Naive thymus-derived CD4-positive, alpha-beta T cell (primary cell): ENCODE measurements at regions of chr12 and their contacts with region 1.

Region 1: GRCh38 chr12:116277393-116278278 is at the start of gene MED13L:
- DNase-seq: peak; percentile 85 to 96 (median 92)
- ATAC-seq: peak; percentile 91
- H3K4me3 ChIP-seq: peak within 1 kb of the TSS; percentile 82
- H3K4me3 Mint-ChIP-seq: peak within 1 kb of the TSS; percentile 92 to 99 (median 98)
- H3K27ac ChIP-seq: peak within 1 kb of the TSS; percentile 68
- H3K27ac Mint-ChIP-seq: peak within 1 kb of the TSS; percentile 92 to 97 (median 94)
- H3K4me1 ChIP-seq: peaks cover 13 to 20% of the 10 kb centered on the region in 2 donors
- H3K4me1 Mint-ChIP-seq: peaks cover 33 to 48% (median 38%) of the 10 kb centered on the region in 7 donors
- H3K27me3 ChIP-seq: no peaks in the 10 kb centered on the region
- H3K27me3 Mint-ChIP-seq: peaks cover 0 to 7% (median 0%) of the 10 kb centered on the region in 5 donors
- total RNA-seq, gene MED13L: 94.0 to 283 (median 180) TPM

Region 2: DNA sequence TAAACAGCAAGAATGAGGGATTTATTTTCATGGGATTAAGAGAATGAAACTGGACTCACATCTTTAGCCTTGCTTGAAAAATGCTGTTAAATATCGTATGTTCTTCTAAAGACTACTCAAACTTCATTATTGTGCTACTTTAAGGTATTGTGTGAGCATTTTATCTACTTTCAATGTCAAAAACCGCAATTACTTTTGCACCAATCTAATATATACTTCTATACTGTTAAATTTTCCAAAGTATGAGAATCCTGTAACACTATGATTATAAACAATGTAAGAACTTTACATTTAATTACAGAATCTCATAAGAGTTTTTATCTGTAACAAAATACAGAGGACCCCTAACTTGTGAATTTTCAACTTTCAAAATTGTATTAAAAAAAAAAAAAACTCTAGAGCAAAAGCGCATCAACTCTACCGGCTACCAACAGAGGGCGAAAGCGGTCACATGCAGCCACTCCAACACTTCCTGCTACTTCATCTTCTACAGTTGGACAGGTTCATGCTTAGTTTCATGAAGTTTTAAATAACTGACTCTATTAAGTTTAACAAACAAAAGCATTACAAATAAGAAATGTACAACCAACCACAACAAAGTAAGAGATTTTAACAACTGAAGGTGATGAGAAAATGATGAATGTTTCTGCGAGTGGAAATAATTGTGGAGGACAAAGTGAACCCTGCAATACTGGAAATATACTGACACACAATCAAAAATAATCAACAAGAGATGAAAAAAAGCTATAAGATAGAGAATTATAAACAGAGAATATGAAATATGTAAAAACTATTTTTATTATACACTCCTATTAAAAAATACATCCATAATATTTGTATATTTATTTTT is 211.0 kb before region 1 on chr12:
- CTCF ChIA-PET with region 1: interaction called, 3 read pairs
- POLR2A ChIA-PET with region 1: no interaction called
- intact Hi-C with region 1: loop called (anchors 1 to 2 kb)
- DNase-seq: peak; percentile 18 to 58 (median 49)
- ATAC-seq: peak; percentile 87
- H3K4me3 ChIP-seq: no peak overlapping the region
- H3K4me3 Mint-ChIP-seq: peak overlapping the region in 1 of 10 donors; percentile 14
- H3K27ac ChIP-seq: no peak overlapping the region
- H3K27ac Mint-ChIP-seq: peak overlapping the region in 4 of 9 donors; percentile 3 to 80 (median 10)
- H3K4me1 ChIP-seq: no peaks in the 10 kb centered on the region
- H3K4me1 Mint-ChIP-seq: peaks cover 22 to 72% (median 55%) of the 10 kb centered on the region in 7 donors
- H3K27me3 ChIP-seq: no peaks in the 10 kb centered on the region
- H3K27me3 Mint-ChIP-seq: no peaks in the 10 kb centered on the region

Region 3: DNA sequence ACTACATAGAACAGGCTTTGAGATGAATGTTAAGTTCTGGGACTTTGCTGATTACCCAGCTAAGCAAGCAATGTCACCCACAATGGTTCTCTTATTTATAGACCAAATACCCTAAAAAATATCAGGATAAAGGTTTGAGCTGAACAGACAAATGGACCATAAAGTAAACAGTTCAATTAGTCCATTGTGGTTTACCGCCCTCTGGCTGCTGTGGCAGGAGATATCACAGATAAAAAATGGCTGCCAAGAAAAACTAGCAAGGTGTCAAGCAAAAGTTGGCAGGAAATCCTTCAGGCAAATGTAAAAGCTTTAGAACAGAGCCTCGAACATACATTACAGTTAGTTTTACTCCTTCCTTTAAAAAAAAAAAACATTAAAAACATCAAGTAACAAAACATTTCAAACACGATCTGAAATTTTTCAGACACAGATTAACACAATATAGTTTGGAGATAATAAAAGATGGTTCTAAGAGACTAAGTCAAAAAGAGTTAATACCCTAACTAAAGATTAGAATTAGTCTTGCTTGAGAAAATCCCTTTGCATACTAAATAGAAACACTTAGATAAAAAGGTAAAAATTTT is 41.4 kb before region 1 on chr12:
- CTCF ChIA-PET with region 1: no interaction called
- POLR2A ChIA-PET with region 1: interaction called, 3 read pairs
- intact Hi-C with region 1: loop called (anchors 1 to 2 kb)
- DNase-seq: peak in 8 of 9 donors; percentile 34 to 61 (median 46)
- ATAC-seq: peak; percentile 85
- H3K4me3 ChIP-seq: no peak overlapping the region
- H3K4me3 Mint-ChIP-seq: peak overlapping the region in 8 of 10 donors; percentile 16 to 71 (median 44)
- H3K27ac ChIP-seq: peak overlapping the region; percentile 37
- H3K27ac Mint-ChIP-seq: peak overlapping the region; percentile 38 to 89 (median 82)
- H3K4me1 ChIP-seq: peaks cover 0 to 18% of the 10 kb centered on the region in 2 donors
- H3K4me1 Mint-ChIP-seq: peaks cover 25 to 70% (median 57%) of the 10 kb centered on the region in 7 donors
- H3K27me3 ChIP-seq: no peaks in the 10 kb centered on the region
- H3K27me3 Mint-ChIP-seq: no peaks in the 10 kb centered on the region

Region 4: GRCh38 chr12:116314477-116314876 is 36.8 kb after region 1 on chr12:
- CTCF ChIA-PET with region 1: no interaction called
- POLR2A ChIA-PET with region 1: no interaction called
- intact Hi-C with region 1: no loop called
- DNase-seq: no peak
- ATAC-seq: peak; percentile 34
- H3K4me3 ChIP-seq: no peak overlapping the region
- H3K4me3 Mint-ChIP-seq: no peak overlapping the region
- H3K27ac ChIP-seq: no peak overlapping the region
- H3K27ac Mint-ChIP-seq: no peak overlapping the region
- H3K4me1 ChIP-seq: peaks cover 0 to 2% of the 10 kb centered on the region in 2 donors
- H3K4me1 Mint-ChIP-seq: peaks cover 5 to 23% (median 8%) of the 10 kb centered on the region in 7 donors
- H3K27me3 ChIP-seq: no peaks in the 10 kb centered on the region
- H3K27me3 Mint-ChIP-seq: peaks cover 0 to 3% (median 0%) of the 10 kb centered on the region in 5 donors

Region 5: DNA sequence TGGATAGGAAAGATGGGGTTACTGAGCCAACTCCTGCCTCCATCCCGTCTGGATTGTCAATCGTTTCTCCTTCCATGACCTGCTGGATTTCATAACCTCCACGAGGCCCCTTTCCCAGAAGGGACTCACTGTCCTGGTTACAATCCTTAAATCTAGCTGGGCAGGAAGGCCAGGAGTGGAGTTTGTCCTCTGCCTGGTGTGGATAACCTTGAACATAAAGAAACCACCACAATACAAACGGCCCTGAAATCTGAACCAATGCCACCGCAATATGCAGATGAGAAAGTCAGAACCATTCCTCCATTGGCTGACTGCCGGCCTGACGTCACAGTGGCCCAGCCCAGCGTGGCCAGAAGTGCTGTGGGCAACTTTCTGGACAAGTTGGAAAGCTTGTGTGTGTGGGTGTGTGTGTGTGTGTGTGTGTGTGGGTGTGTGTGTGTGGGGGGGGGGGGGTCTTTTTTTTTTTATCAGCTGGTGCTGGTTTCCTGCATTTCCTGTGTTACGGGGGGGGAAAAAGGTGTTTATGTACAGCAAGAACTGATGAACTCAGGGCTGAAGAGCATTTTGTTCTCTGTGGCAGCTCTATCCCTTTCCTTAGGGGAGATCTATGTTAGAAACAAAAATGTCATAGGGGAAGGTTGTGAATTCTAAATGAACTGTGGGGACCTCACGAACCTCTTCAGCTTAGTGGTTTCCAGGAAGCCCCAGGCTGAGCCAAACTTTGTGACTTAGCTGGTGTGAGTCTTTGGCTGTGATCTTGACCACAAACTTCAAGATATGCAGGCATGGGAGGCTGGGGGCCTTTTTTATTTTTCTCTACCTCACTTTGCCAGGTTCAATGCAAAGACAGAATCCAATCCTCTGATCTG is 81.5 kb after region 1 on chr12:
- CTCF ChIA-PET with region 1: interaction called, 3 read pairs
- POLR2A ChIA-PET with region 1: interaction called, 3 read pairs
- intact Hi-C with region 1: loop called (anchors 1 kb)
- DNase-seq: peak; percentile 45 to 74 (median 57)
- ATAC-seq: peak; percentile 93
- H3K4me3 ChIP-seq: peak overlapping the region; percentile 49
- H3K4me3 Mint-ChIP-seq: peak overlapping the region; percentile 77 to 88 (median 84)
- H3K27ac ChIP-seq: peak overlapping the region; percentile 58
- H3K27ac Mint-ChIP-seq: peak overlapping the region; percentile 75 to 90 (median 86)
- H3K4me1 ChIP-seq: peaks cover 15 to 27% of the 10 kb centered on the region in 2 donors
- H3K4me1 Mint-ChIP-seq: peaks cover 21 to 43% (median 31%) of the 10 kb centered on the region in 7 donors
- H3K27me3 ChIP-seq: no peaks in the 10 kb centered on the region
- H3K27me3 Mint-ChIP-seq: no peaks in the 10 kb centered on the region

Region 6: DNA sequence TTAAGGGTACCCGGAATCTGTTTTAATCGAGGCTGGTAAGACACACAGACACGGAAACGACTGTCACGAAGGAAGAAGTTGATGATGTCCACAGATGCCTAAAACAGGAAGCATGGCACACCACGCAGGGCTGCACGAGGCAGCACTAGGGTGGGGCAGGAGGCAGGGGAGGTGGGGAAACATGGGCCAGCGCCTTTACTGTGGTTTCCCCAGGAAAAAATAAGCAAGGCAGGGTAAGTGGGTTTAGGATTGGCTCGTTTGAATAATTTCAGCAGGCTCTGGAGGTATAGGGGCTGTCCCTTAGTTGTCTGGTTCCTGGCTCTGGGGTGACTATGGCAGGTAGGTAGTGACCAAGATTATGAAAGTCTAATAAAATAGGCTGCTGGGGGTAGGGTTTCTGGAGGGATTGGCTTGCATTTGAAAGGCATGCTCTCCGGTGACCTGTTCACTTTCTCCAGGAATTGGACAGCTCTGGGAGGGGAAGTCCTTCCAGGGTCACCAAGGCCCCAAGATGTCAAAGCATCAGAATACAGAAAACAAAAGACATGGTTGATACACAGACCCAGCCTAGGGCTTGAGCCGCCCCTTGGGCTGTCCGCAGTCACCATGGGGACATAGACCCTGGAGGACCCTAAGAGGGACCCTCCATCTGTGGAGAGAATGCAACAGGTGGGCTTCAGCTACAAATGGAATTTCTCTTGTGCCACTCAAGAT is 316.8 kb after region 1 on chr12:
- CTCF ChIA-PET with region 1: no interaction called
- POLR2A ChIA-PET with region 1: interaction called, 3 read pairs
- intact Hi-C with region 1: loop called (anchors 1 kb)
- DNase-seq: peak; percentile 24 to 77 (median 69)
- ATAC-seq: peak; percentile 93
- H3K4me3 ChIP-seq: peak overlapping the region; percentile 5
- H3K4me3 Mint-ChIP-seq: peak overlapping the region; percentile 16 to 85 (median 63)
- H3K27ac ChIP-seq: no peak overlapping the region
- H3K27ac Mint-ChIP-seq: peak overlapping the region; percentile 42 to 78 (median 69)
- H3K4me1 ChIP-seq: peaks cover 9 to 32% of the 10 kb centered on the region in 2 donors
- H3K4me1 Mint-ChIP-seq: peaks cover 34 to 51% (median 47%) of the 10 kb centered on the region in 7 donors
- H3K27me3 ChIP-seq: no peaks in the 10 kb centered on the region
- H3K27me3 Mint-ChIP-seq: peaks cover 0 to 8% (median 0%) of the 10 kb centered on the region in 5 donors

Region 7: DNA sequence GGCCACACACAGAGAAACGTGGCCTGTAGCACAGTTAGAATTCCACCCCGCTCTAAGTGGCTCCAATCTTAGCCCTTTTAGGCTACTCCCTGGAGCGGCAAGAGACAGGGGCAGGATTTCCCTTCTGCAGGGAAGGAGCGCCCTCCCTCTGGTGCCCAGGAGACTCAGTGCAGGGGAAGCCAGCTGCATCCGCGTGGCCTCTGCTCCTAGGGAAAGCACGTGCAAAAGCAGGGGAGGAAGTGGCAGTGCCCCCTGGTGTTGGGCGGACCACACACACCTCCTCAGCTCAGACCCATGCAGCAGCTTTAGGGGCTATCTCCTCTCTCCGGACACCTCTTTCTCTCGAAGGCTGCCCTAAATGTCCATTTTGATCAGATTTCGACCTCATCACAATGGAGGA is 410.3 kb after region 1 on chr12:
- CTCF ChIA-PET with region 1: no interaction called
- POLR2A ChIA-PET with region 1: no interaction called
- intact Hi-C with region 1: loop called in 1 of 2 experiments (anchors 1 kb)
- DNase-seq: peak in 4 of 9 donors; percentile 10 to 20 (median 13)
- ATAC-seq: peak; percentile 76
- H3K4me3 ChIP-seq: no peak overlapping the region
- H3K4me3 Mint-ChIP-seq: no peak overlapping the region
- H3K27ac ChIP-seq: no peak overlapping the region
- H3K27ac Mint-ChIP-seq: no peak overlapping the region
- H3K4me1 ChIP-seq: no peaks in the 10 kb centered on the region
- H3K4me1 Mint-ChIP-seq: peaks cover 0 to 8% (median 3%) of the 10 kb centered on the region in 7 donors
- H3K27me3 ChIP-seq: no peaks in the 10 kb centered on the region
- H3K27me3 Mint-ChIP-seq: peaks cover 4 to 28% (median 6%) of the 10 kb centered on the region in 5 donors

Region 8: DNA sequence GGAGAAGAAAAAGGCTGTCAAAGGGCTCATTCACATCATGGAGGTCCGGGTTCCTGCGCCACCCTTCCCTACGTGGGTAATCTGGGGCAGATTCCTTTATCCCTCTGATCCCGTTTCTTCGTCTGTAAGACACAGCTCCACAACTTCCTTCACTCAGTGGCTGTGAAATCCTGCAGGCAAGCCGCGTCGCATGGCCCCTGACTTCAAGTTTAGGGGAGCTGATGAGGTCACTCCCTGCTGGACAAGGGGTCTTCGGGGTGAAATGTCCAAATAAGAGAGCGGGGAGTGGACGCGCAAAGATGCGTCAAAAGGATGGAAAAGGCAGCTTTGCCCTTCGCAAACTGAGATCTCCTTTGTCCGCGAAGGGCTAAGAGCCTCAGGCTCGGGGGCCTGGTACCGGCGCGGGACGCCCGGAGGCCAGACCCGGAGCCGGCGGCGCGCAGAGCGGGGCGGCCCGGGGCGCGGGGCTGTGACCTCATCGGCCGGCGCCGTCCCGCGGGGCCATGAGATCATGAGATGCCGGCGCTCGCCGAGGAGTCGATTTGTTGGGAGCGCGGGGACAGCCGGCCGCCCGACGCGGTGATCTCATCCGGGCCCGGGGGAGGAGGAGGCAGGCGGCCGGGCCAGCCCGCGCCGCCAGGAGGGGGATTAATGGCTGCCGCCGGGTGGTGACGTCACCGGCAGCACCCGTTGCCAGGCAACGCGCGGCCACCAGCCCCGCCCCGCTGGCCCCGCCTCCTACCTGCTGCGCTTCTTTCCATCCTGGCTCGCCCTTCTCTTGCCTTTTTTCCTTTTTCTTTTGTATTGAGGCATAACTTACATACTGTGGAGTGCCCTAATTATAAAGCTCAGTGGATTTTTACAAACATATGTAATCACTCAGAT is 541.6 kb after region 1 on chr12:
- CTCF ChIA-PET with region 1: no interaction called
- POLR2A ChIA-PET with region 1: no interaction called
- intact Hi-C with region 1: loop called in 1 of 2 experiments (anchors 2 kb)
- DNase-seq: peak; percentile 86 to 94 (median 91)
- ATAC-seq: peak; percentile 90
- H3K4me3 ChIP-seq: peak overlapping the region; percentile 99
- H3K4me3 Mint-ChIP-seq: peak overlapping the region; percentile 78 to 99 (median 94)
- H3K27ac ChIP-seq: peak overlapping the region; percentile 97
- H3K27ac Mint-ChIP-seq: peak overlapping the region; percentile 87 to 99 (median 96)
- H3K4me1 ChIP-seq: peaks cover 7 to 11% of the 10 kb centered on the region in 2 donors
- H3K4me1 Mint-ChIP-seq: peaks cover 12 to 31% (median 24%) of the 10 kb centered on the region in 7 donors
- H3K27me3 ChIP-seq: no peaks in the 10 kb centered on the region
- H3K27me3 Mint-ChIP-seq: no peaks in the 10 kb centered on the region